A549 (cell line): ENCODE measurements at regions of chr19 and their contacts with region 1.

Region 1: DNA sequence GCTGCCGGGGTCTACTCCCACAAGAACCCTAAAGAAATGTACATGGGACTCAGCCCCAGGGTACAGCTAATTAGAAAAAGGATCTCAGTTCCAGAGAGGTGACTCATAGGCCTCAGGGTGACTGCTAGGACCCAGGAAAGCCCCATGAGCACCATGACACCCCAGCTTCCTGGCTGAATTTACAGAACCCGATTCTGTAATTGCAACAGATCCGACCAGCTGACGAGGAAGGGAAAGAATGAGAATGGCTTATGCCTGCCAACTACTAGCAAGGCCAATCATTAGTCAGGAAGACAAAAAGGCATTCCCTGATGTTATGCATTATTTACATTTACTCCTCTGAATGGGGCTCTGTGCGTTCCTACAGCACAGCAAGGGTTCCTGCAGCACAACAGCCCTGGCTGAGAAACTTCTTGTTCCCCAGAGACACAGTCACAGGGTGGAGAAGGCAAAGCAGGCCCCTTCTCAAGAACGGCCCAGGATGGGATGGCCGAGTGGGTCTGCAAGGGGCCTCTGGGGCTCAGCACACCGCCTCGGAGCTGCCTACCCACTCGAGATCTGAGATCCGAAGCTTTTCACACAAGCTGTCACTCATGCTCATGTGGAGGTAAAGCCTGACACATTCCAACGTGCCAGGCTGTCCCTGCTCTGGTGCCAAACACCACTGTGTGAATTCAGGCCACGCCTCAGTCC is 27.2 kb downstream of the PBX4 start:
- DNase-seq: peak; percentile 54 to 58
- ATAC-seq: peak; percentile 73 to 74; a peak in 5 of 6 replicates
- H3K4me3 ChIP-seq: no peak overlapping the region
- H3K27ac ChIP-seq: peak overlapping the region; percentile 50 to 79; a peak in 5 of 6 replicates
- H3K4me1 ChIP-seq: peaks cover 12% of the 10 kb centered on the region
- CTCF ChIP-seq: no peak
- EP300 ChIP-seq: no peak
- POLR2A ChIP-seq: no peak
- RAD21 ChIP-seq: no peak

Region 2: GRCh38 chr19:19554074-19555023 is 36.9 kb before region 1 on chr19:
- CTCF ChIA-PET with region 1: interaction called, 14 read pairs
- POLR2A ChIA-PET with region 1: no interaction called
- DNase-seq: no peak
- ATAC-seq: peak in 1 of 2 experiments; percentile 73; a peak in 3 of 6 replicates
- H3K4me3 ChIP-seq: no peak overlapping the region
- H3K27ac ChIP-seq: no peak overlapping the region
- H3K4me1 ChIP-seq: no peaks in the 10 kb centered on the region
- CTCF ChIP-seq: peak; percentile 34
- EP300 ChIP-seq: no peak
- POLR2A ChIP-seq: no peak
- RAD21 ChIP-seq: peak in 1 of 2 experiments; percentile 38; a peak in 3 of 5 replicates